K562 (cell line): ENCODE measurements at regions of chr21 and their contacts with region 1.

Region 1: DNA sequence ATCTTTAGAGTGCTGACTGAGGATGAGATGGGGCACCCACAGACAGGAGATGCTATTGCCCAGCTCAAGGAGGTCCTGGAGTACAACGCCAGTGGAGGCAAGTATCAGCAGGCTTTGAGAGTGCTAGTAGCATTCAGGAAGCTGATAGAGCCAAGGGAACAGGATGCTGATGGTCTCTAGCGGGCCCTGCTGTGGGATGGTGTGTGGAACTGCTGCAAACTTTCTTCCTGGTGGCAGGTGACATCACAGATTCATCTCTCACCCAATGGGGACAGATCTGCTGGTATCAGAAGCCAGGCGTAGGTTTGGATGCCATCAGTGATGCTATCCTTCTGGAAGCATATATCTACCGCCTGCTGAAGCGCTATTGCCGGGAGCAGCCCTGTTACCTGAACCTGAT is 609.8 kb upstream of the NCAM2 start:
- DNase-seq: peak in 2 of 4 experiments; percentile 16 to 53
- ATAC-seq: peak; percentile 92
- H3K4me3 ChIP-seq: no peak overlapping the region
- H3K27ac ChIP-seq: no peak overlapping the region
- H3K4me1 ChIP-seq: no peaks in the 10 kb centered on the region; a peak in 2 of 5 replicates
- H3K27me3 ChIP-seq: no peaks in the 10 kb centered on the region
- CTCF ChIP-seq: peak; percentile 23 to 36 (median 31); a peak in 3 of 6 replicates
- EP300 ChIP-seq: no peak
- POLR2A ChIP-seq: no peak
- RAD21 ChIP-seq: peak in 1 of 2 experiments; percentile 50; a peak in 2 of 4 replicates

Region 2: GRCh38 chr21:20215959-20216358 is 172.4 kb before region 1 on chr21:
- CTCF ChIA-PET with region 1: no interaction called
- POLR2A ChIA-PET with region 1: no interaction called
- in situ Hi-C with region 1: no loop called
- intact Hi-C with region 1: loop called (anchors 5 kb)
- DNase-seq: peak in 1 of 4 experiments; percentile 21
- ATAC-seq: peak; percentile 47; the same call in 1 of the 3 replicates
- H3K4me3 ChIP-seq: no peak overlapping the region
- H3K27ac ChIP-seq: no peak overlapping the region
- H3K4me1 ChIP-seq: no peaks in the 10 kb centered on the region
- H3K27me3 ChIP-seq: no peaks in the 10 kb centered on the region
- CTCF ChIP-seq: peak in 2 of 3 experiments; percentile 14 to 22; a peak in 1 of 6 replicates
- EP300 ChIP-seq: no peak
- POLR2A ChIP-seq: no peak
- RAD21 ChIP-seq: peak in 1 of 2 experiments; percentile 50; a peak in 1 of 4 replicates

Region 3: DNA sequence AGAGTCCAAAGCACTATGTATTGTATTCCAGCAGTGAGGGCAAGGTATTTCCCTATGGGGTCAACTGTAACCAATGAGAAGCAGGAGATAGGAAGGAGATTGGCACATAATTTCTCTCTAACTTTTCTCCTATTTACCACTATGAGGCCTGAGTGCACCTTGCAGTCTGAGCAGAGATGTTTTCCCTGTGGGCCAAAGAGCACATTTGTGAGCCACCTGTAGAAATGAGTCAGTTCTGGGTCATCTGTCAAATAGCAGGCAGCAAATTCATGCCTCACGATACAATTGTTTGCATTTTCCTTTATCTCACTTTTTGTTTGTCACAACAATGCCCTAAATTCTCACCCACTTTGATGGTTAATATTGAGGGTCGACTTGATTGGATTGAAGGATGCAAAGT is 62.6 kb after region 1 on chr21:
- CTCF ChIA-PET with region 1: no interaction called
- POLR2A ChIA-PET with region 1: no interaction called
- in situ Hi-C with region 1: no loop called
- intact Hi-C with region 1: no loop called
- DNase-seq: no peak
- ATAC-seq: no peak
- H3K4me3 ChIP-seq: no peak overlapping the region
- H3K27ac ChIP-seq: no peak overlapping the region
- H3K4me1 ChIP-seq: no peaks in the 10 kb centered on the region
- H3K27me3 ChIP-seq: no peaks in the 10 kb centered on the region
- CTCF ChIP-seq: no peak
- EP300 ChIP-seq: no peak
- POLR2A ChIP-seq: no peak
- RAD21 ChIP-seq: no peak

Region 4: GRCh38 chr21:20603236-20603635 is 214.8 kb after region 1 on chr21:
- CTCF ChIA-PET with region 1: no interaction called
- POLR2A ChIA-PET with region 1: no interaction called
- in situ Hi-C with region 1: no loop called
- intact Hi-C with region 1: no loop called
- DNase-seq: no peak
- ATAC-seq: no peak
- H3K4me3 ChIP-seq: no peak overlapping the region
- H3K27ac ChIP-seq: no peak overlapping the region
- H3K4me1 ChIP-seq: no peaks in the 10 kb centered on the region
- H3K27me3 ChIP-seq: no peaks in the 10 kb centered on the region
- CTCF ChIP-seq: no peak
- EP300 ChIP-seq: no peak
- POLR2A ChIP-seq: no peak
- RAD21 ChIP-seq: no peak